ENCODE measurements at regions of chr14 and their contacts with region 1.

Region 1: GRCh38 chr14:37023875-37024565 is 148.4 kb downstream of the SLC25A21 start:
- DNase-seq: peak in 3 of 4 experiments; percentile 7 to 11 (median 11)
- ATAC-seq: peak; percentile 64; the same call in 2 of the 3 replicates
- H3K4me3 ChIP-seq: no peak overlapping the region
- H3K27ac ChIP-seq: no peak overlapping the region
- H3K4me1 ChIP-seq: peaks cover 0 to 7% of the 10 kb centered on the region in 2 experiments; a peak in 3 of 5 replicates
- H3K27me3 ChIP-seq: no peaks in the 10 kb centered on the region
- CTCF ChIP-seq: peak; percentile 10 to 30 (median 19); a peak in 2 of 6 replicates
- EP300 ChIP-seq: no peak
- POLR2A ChIP-seq: no peak
- RAD21 ChIP-seq: peak in 1 of 2 experiments; percentile 39; a peak in 2 of 4 replicates

Region 2: DNA sequence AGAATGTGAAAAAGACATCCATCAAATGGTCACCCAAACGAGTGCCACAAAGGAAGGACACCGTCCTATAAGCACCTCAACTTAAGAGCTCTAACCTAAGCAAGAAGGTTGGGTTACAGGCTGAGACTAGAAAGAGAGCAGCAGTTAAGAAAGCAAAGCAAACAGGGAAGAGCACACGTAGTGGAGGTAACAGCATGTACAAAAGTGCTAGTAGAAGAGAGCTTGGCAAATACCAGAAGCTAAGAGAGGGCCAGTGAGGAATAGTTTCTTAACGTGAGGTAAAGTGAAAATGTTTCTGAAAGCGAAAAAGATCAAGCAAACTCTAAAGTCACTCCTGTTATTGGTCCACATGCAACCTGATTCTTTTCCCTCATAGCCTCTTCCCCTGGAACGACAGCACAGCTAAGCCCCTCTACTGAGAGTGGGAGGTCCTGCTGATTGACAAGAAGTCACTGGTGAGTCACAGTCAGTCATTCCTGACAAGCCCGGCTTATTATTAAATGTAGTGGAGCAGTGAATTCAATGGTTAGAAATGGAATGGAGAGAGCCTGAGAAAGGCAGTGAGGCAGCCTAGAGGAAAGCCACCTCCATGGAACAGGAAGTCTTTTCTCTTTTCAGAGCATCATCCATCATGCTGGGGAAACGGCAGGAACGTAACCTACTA is 56.0 kb before region 1 on chr14:
- CTCF ChIA-PET with region 1: no interaction called
- POLR2A ChIA-PET with region 1: no interaction called
- in situ Hi-C with region 1: no loop called
- intact Hi-C with region 1: loop called (anchors 5 kb)
- DNase-seq: peak in 1 of 4 experiments; percentile 23
- ATAC-seq: peak; percentile 13; the same call in 2 of the 3 replicates
- H3K4me3 ChIP-seq: no peak overlapping the region
- H3K27ac ChIP-seq: no peak overlapping the region
- H3K4me1 ChIP-seq: peaks cover 0 to 7% of the 10 kb centered on the region in 2 experiments; a peak in 3 of 5 replicates
- H3K27me3 ChIP-seq: no peaks in the 10 kb centered on the region
- CTCF ChIP-seq: no peak
- EP300 ChIP-seq: no peak
- POLR2A ChIP-seq: no peak
- RAD21 ChIP-seq: no peak

Region 3: GRCh38 chr14:37142835-37143401 is 118.9 kb after region 1 on chr14:
- CTCF ChIA-PET with region 1: no interaction called
- POLR2A ChIA-PET with region 1: no interaction called
- in situ Hi-C with region 1: no loop called
- intact Hi-C with region 1: loop called (anchors 10 kb)
- DNase-seq: no peak
- ATAC-seq: peak; percentile 52
- H3K4me3 ChIP-seq: no peak overlapping the region
- H3K27ac ChIP-seq: no peak overlapping the region
- H3K4me1 ChIP-seq: peaks cover 0 to 5% of the 10 kb centered on the region in 2 experiments; a peak in 3 of 5 replicates
- H3K27me3 ChIP-seq: no peaks in the 10 kb centered on the region
- CTCF ChIP-seq: no peak
- EP300 ChIP-seq: no peak
- POLR2A ChIP-seq: no peak
- RAD21 ChIP-seq: no peak